HepG2 (cell line): ENCODE measurements at regions of chr14 and their contacts with region 1.

Region 1: GRCh38 chr14:89915114-89915878 is 39.2 kb downstream of the EFCAB11 start:
- DNase-seq: peak; percentile 59
- ATAC-seq: no peak
- H3K4me3 ChIP-seq: peak overlapping the region in 1 of 3 experiments; percentile 19; a peak in 1 of 6 replicates
- H3K27ac ChIP-seq: peak overlapping the region; percentile 28
- H3K4me1 ChIP-seq: peaks cover 38% of the 10 kb centered on the region
- H3K27me3 ChIP-seq: no peaks in the 10 kb centered on the region
- CTCF ChIP-seq: peak; percentile 82
- EP300 ChIP-seq: no peak
- POLR2A ChIP-seq: no peak
- RAD21 ChIP-seq: peak; percentile 74

Region 2: GRCh38 chr14:89027097-89027740 is 888.1 kb before region 1 on chr14:
- CTCF ChIA-PET with region 1: interaction called, 3 read pairs
- POLR2A ChIA-PET with region 1: interaction called, 3 read pairs
- in situ Hi-C with region 1: no loop called
- intact Hi-C with region 1: loop called (anchors 5 kb)
- DNase-seq: peak; percentile 21
- ATAC-seq: peak; percentile 91
- H3K4me3 ChIP-seq: peak overlapping the region; percentile 69 to 82 (median 81)
- H3K27ac ChIP-seq: peak overlapping the region; percentile 35
- H3K4me1 ChIP-seq: peaks cover 37% of the 10 kb centered on the region
- H3K27me3 ChIP-seq: no peaks in the 10 kb centered on the region; a peak in 2 of 5 replicates
- CTCF ChIP-seq: peak; percentile 80
- EP300 ChIP-seq: no peak
- POLR2A ChIP-seq: no peak
- RAD21 ChIP-seq: peak; percentile 96

Region 3: GRCh38 chr14:89237921-89238529 is 677.3 kb before region 1 on chr14:
- CTCF ChIA-PET with region 1: no interaction called
- POLR2A ChIA-PET with region 1: no interaction called
- in situ Hi-C with region 1: loop called (anchors 25 kb)
- intact Hi-C with region 1: no loop called
- DNase-seq: no peak
- ATAC-seq: no peak
- H3K4me3 ChIP-seq: no peak overlapping the region
- H3K27ac ChIP-seq: no peak overlapping the region
- H3K4me1 ChIP-seq: peaks cover 29% of the 10 kb centered on the region
- H3K27me3 ChIP-seq: no peaks in the 10 kb centered on the region
- CTCF ChIP-seq: no peak
- EP300 ChIP-seq: no peak
- POLR2A ChIP-seq: no peak
- RAD21 ChIP-seq: no peak

Region 4: DNA sequence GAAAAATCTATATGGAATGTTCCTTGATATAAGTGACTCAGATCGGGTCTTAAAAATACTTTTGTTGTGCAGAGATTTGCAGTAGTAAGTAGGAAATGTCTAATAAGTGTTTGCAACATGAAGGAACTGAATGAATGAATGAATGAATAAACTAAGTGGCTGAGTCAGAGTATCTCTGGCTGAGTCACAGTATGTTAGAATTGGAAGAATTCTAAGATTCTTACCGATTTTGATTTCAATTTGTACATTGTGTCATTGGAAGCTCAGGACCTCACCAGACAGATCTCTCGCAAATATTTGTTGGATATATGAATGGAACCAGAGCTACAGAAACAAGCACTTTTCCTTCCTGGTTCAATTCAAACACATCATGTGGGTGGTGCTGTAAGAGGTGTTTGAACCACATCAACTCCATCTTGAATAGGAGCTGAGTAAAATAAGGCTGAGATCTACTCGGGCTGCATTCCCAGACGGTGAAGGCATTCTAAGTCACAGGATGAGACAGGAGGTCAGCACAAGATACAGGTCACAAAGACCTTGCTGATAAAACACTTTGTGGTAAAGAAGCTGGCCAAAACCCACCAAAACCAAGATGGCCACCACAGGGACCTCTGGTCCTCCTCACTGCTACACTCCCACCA is 374.3 kb before region 1 on chr14:
- CTCF ChIA-PET with region 1: no interaction called
- POLR2A ChIA-PET with region 1: no interaction called
- in situ Hi-C with region 1: no loop called
- intact Hi-C with region 1: loop called (anchors 10 kb)
- DNase-seq: no peak
- ATAC-seq: no peak
- H3K4me3 ChIP-seq: no peak overlapping the region
- H3K27ac ChIP-seq: peak overlapping the region; percentile 45
- H3K4me1 ChIP-seq: peaks cover 65% of the 10 kb centered on the region
- H3K27me3 ChIP-seq: no peaks in the 10 kb centered on the region
- CTCF ChIP-seq: no peak
- EP300 ChIP-seq: no peak
- POLR2A ChIP-seq: no peak
- RAD21 ChIP-seq: no peak

Region 5: GRCh38 chr14:89618811-89619551 is 296.3 kb before region 1 on chr14:
- CTCF ChIA-PET with region 1: no interaction called
- POLR2A ChIA-PET with region 1: no interaction called
- in situ Hi-C with region 1: no loop called
- intact Hi-C with region 1: loop called (anchors 10 kb)
- DNase-seq: peak; percentile 12
- ATAC-seq: peak; percentile 93
- H3K4me3 ChIP-seq: peak overlapping the region; percentile 79 to 92 (median 80)
- H3K27ac ChIP-seq: peak overlapping the region; percentile 65
- H3K4me1 ChIP-seq: peaks cover 75% of the 10 kb centered on the region
- H3K27me3 ChIP-seq: no peaks in the 10 kb centered on the region; a peak in 2 of 5 replicates
- CTCF ChIP-seq: no peak
- EP300 ChIP-seq: no peak; a peak in 1 of 4 replicates
- POLR2A ChIP-seq: peak in 1 of 2 experiments; percentile 56; a peak in 2 of 4 replicates
- RAD21 ChIP-seq: peak; percentile 83; the same call in 1 of the 2 replicates

Region 6: DNA sequence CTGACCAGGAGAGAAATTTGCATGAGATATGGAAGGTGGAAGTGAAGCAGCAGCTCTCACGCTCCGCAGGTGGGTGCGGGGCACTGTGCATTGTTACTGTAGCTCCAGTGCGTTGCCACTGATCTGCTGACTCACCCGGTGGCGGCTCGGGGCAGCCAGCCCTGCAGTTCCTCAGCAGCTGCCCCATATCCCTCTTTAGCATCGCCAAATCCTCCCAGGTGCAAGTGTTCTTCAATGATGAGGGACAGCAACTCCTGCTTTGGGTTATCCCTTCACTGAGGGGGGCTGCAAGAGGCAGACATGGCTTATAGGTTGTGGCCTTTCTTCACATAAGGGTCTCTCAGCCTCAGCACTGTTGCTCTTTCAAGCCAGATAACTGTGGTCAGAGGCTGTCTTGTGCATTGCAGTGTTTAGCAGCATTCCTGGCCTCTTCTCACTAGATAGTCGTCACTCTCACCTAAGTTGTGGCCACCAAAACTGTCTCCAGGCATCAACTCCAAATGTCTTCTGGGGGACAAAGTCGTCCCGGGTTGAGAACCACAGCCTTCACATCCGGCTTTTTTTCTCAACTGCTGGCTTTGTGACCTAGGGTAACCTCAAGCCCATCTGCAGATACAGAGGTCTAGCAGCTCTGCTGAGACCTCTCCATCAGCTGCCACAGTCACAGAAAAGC is 141.5 kb before region 1 on chr14:
- CTCF ChIA-PET with region 1: no interaction called
- POLR2A ChIA-PET with region 1: no interaction called
- in situ Hi-C with region 1: no loop called
- intact Hi-C with region 1: loop called (anchors 10 kb)
- DNase-seq: peak; percentile 61
- ATAC-seq: peak; percentile 99
- H3K4me3 ChIP-seq: peak overlapping the region; percentile 51 to 71 (median 56); a peak in 5 of 6 replicates
- H3K27ac ChIP-seq: peak overlapping the region; percentile 57
- H3K4me1 ChIP-seq: peaks cover 46% of the 10 kb centered on the region
- H3K27me3 ChIP-seq: no peaks in the 10 kb centered on the region
- CTCF ChIP-seq: no peak
- EP300 ChIP-seq: 0 out of 4 replicates have a peak, but pooled peaks of 1 of the 2 experiments have one; percentile 23
- POLR2A ChIP-seq: peak in 1 of 2 experiments; percentile 50; a peak in 2 of 4 replicates
- RAD21 ChIP-seq: no peak

Region 7: DNA sequence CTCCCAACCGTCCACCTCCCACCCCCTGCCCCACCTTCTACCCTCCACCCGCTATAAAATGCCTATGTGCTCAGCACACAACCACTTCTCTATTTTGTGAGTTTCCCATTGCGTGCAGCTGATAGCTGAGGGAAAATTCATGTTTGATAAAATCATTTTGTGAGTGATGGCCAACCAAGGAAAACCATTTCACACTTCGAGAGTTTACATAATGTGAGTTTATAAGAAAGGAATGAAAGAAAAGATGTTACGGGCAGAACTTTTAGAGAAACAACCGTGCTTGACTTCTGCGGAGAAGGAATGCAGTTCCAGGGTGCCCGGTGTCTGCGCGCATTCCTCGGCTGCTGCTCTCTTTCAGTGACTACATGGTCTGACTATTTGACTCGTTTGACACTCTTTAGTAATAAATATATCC is 101.7 kb before region 1 on chr14:
- CTCF ChIA-PET with region 1: no interaction called
- POLR2A ChIA-PET with region 1: no interaction called
- in situ Hi-C with region 1: no loop called
- intact Hi-C with region 1: no loop called
- DNase-seq: no peak
- ATAC-seq: no peak
- H3K4me3 ChIP-seq: no peak overlapping the region
- H3K27ac ChIP-seq: no peak overlapping the region
- H3K4me1 ChIP-seq: no peaks in the 10 kb centered on the region
- H3K27me3 ChIP-seq: no peaks in the 10 kb centered on the region; a peak in 1 of 5 replicates
- CTCF ChIP-seq: no peak
- EP300 ChIP-seq: no peak
- POLR2A ChIP-seq: no peak
- RAD21 ChIP-seq: no peak

Region 8: DNA sequence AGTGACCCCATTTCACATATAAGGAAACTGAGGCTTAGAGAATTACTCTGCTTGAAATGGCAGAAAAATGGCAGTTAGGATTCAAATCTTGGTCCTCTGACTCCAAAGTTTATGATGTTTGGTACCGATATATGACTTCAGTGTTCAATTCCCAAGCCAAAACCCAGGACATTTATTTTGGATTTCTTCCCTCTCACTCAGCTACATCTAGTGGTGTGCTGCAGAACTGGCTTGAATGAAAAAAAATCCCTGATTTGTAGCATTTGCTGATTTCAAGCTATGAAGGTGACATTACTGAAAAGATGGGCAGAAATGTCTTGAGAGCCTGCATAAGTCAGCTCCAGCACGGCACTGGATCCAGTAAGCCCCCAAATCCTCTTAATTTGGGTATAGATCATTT is 67.1 kb before region 1 on chr14:
- CTCF ChIA-PET with region 1: no interaction called
- POLR2A ChIA-PET with region 1: no interaction called
- in situ Hi-C with region 1: no loop called
- intact Hi-C with region 1: no loop called
- DNase-seq: no peak
- ATAC-seq: no peak
- H3K4me3 ChIP-seq: no peak overlapping the region
- H3K27ac ChIP-seq: no peak overlapping the region
- H3K4me1 ChIP-seq: no peaks in the 10 kb centered on the region
- H3K27me3 ChIP-seq: no peaks in the 10 kb centered on the region
- CTCF ChIP-seq: no peak
- EP300 ChIP-seq: no peak
- POLR2A ChIP-seq: no peak
- RAD21 ChIP-seq: no peak

Region 9: DNA sequence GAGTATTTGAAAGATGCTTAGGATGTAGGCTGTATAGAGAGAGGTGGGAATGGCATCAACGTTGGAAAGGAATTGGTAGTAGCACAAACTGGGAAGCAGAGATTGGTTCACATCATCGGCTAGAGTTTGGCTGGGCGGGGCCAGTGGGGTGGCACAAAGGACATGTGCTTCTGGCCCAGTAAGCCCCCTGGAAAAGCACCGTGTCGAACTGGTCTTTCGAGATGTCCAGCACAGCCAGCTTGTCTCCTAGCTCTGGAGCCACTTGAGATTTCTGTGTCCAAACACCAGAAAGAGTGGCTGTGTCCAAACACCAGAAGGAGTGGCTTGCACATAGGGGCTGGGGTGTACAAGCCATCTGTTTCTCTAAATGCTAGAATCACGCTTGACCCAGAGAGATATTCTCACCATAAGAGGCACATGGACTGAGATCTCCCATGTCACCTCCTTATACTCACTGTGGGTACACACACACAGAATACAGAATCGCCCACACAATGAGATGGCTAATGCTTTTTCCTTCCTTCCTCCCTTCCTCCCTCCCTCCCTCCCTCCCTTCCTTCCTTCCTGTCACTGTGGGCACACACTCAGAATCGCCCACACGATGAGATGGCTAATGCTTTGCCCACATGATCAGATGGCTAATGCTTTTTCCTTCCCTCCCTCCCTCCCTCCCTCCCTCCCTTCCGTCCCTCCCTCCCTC is 104.7 kb after region 1 on chr14:
- CTCF ChIA-PET with region 1: no interaction called
- POLR2A ChIA-PET with region 1: no interaction called
- in situ Hi-C with region 1: no loop called
- intact Hi-C with region 1: no loop called
- DNase-seq: no peak
- ATAC-seq: no peak
- H3K4me3 ChIP-seq: no peak overlapping the region
- H3K27ac ChIP-seq: no peak overlapping the region
- H3K4me1 ChIP-seq: no peaks in the 10 kb centered on the region
- H3K27me3 ChIP-seq: no peaks in the 10 kb centered on the region
- CTCF ChIP-seq: no peak
- EP300 ChIP-seq: no peak
- POLR2A ChIP-seq: no peak
- RAD21 ChIP-seq: no peak